H1 (cell line): ENCODE measurements at regions of chr3 and their contacts with region 1.

Region 1: GRCh38 chr3:3799173-3800079 is at the start of gene LRRN1:
- DNase-seq: peak; percentile 69 to 88
- H3K4me3 ChIP-seq: peak within 1 kb of the TSS; percentile 84 to 94 (median 88)
- H3K27ac ChIP-seq: peak within 1 kb of the TSS; percentile 93
- H3K4me1 ChIP-seq: peaks cover 5 to 18% (median 9%) of the 10 kb centered on the region in 4 experiments; a peak in 6 of 7 replicates
- H3K27me3 ChIP-seq: peaks cover 0 to 7% (median 2%) of the 10 kb centered on the region in 4 experiments; a peak in 5 of 7 replicates
- CTCF ChIP-seq: no peak
- EP300 ChIP-seq: peak in 1 of 2 experiments; percentile 62; a peak in 1 of 3 replicates
- POLR2A ChIP-seq: peak; percentile 89 to 98
- RAD21 ChIP-seq: 0 out of 4 replicates have a peak, but pooled peaks of 1 of the 2 experiments have one; percentile 0
- total RNA-seq, gene LRRN1: 199 TPM in 2 replicates

Region 2: DNA sequence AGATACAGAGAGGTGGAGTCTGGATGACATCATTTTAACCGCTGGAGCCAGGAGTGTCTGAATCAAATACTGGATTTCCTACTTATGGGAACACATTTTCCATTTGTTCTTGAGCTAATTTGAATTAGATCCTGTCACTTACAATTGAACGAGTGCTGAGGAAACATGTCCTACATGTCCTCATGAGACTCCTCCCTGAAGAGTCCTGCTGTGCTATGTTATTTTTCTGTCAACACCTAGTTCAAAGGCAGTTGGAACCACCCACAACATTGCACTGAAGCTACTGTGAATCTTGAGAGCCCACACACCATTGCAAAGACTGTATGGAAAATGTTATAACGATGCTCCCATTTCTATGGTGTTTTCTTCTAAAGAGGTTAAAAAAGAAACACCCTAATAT is 496.5 kb before region 1 on chr3:
- CTCF ChIA-PET with region 1: no interaction called
- POLR2A ChIA-PET with region 1: no interaction called
- DNase-seq: no peak
- H3K4me3 ChIP-seq: no peak overlapping the region
- H3K27ac ChIP-seq: no peak overlapping the region
- H3K4me1 ChIP-seq: no peaks in the 10 kb centered on the region
- H3K27me3 ChIP-seq: peaks cover 0 to 1% (median 0%) of the 10 kb centered on the region in 4 experiments; a peak in 1 of 7 replicates
- CTCF ChIP-seq: no peak
- EP300 ChIP-seq: no peak
- POLR2A ChIP-seq: no peak
- RAD21 ChIP-seq: no peak

Region 3: DNA sequence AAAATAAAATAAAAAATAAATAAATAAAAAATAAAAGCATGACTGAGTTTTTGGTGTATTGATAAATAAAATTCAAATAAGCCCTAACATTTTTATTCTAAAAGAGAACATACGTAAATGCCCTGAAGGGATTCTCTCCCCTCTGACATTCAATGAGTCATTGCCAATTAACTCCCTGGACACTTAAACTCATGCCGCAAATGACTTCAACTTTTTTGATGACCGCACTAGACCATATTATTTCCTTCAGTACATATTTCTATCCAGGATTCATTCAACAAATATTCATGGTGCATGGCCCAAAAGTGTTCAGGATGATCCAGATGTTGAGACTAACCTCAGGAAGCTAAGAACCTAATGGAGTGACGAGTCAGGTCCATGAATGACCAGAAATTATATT is 196.1 kb before region 1 on chr3:
- CTCF ChIA-PET with region 1: interaction called, 11 read pairs
- POLR2A ChIA-PET with region 1: interaction called, 10 read pairs
- DNase-seq: no peak
- H3K4me3 ChIP-seq: no peak overlapping the region
- H3K27ac ChIP-seq: no peak overlapping the region
- H3K4me1 ChIP-seq: peaks cover 0 to 4% (median 0%) of the 10 kb centered on the region in 4 experiments; a peak in 2 of 7 replicates
- H3K27me3 ChIP-seq: no peaks in the 10 kb centered on the region
- CTCF ChIP-seq: no peak
- EP300 ChIP-seq: no peak
- POLR2A ChIP-seq: no peak
- RAD21 ChIP-seq: no peak

Region 4: DNA sequence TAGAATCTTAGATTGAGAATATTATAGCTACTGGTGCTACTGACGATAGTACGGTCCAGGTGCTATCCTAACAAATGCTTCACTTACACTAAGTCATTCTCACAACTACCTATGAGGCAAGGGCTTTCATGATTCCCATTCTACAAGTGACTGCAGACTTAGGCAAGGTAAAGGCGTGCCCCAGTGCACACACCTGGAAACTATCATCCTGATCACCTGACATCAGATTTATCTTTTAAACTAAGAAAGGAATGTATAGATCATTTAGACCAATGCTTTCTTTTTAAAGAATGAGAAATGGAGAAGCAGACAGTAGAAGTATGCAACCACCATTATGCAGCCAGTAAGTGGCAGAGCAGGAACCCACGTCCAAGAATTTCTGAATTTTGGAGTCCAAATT is 59.4 kb before region 1 on chr3:
- CTCF ChIA-PET with region 1: interaction called, 4 read pairs
- POLR2A ChIA-PET with region 1: interaction called, 10 read pairs
- DNase-seq: no peak
- H3K4me3 ChIP-seq: no peak overlapping the region
- H3K27ac ChIP-seq: no peak overlapping the region
- H3K4me1 ChIP-seq: peaks cover 0 to 7% (median 4%) of the 10 kb centered on the region in 4 experiments; a peak in 4 of 7 replicates
- H3K27me3 ChIP-seq: no peaks in the 10 kb centered on the region
- CTCF ChIP-seq: no peak
- EP300 ChIP-seq: no peak
- POLR2A ChIP-seq: no peak
- RAD21 ChIP-seq: no peak

Region 5: DNA sequence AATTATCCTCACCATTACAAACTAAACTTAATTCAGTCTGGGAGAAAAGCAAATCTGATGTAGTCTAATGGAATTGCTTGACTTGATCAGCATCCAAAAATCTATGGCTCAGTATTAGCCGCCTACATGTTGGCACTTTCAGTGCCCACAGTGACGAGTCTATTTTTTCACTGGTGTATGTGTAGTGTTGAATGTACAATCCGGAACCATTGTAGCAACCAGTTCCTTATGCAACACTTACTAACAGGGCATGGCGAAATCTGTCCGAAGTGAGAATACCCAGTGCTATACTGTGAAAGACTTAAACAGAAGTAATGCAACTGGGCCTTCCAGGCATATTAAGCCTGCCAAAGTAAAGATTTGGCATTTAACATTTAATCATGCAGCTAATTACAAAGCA is 18.4 kb after region 1 on chr3:
- CTCF ChIA-PET with region 1: no interaction called
- POLR2A ChIA-PET with region 1: interaction called, 115 read pairs
- DNase-seq: no peak
- H3K4me3 ChIP-seq: no peak overlapping the region
- H3K27ac ChIP-seq: no peak overlapping the region
- H3K4me1 ChIP-seq: no peaks in the 10 kb centered on the region; a peak in 1 of 7 replicates
- H3K27me3 ChIP-seq: no peaks in the 10 kb centered on the region
- CTCF ChIP-seq: no peak
- EP300 ChIP-seq: no peak
- POLR2A ChIP-seq: no peak
- RAD21 ChIP-seq: no peak

Region 6: DNA sequence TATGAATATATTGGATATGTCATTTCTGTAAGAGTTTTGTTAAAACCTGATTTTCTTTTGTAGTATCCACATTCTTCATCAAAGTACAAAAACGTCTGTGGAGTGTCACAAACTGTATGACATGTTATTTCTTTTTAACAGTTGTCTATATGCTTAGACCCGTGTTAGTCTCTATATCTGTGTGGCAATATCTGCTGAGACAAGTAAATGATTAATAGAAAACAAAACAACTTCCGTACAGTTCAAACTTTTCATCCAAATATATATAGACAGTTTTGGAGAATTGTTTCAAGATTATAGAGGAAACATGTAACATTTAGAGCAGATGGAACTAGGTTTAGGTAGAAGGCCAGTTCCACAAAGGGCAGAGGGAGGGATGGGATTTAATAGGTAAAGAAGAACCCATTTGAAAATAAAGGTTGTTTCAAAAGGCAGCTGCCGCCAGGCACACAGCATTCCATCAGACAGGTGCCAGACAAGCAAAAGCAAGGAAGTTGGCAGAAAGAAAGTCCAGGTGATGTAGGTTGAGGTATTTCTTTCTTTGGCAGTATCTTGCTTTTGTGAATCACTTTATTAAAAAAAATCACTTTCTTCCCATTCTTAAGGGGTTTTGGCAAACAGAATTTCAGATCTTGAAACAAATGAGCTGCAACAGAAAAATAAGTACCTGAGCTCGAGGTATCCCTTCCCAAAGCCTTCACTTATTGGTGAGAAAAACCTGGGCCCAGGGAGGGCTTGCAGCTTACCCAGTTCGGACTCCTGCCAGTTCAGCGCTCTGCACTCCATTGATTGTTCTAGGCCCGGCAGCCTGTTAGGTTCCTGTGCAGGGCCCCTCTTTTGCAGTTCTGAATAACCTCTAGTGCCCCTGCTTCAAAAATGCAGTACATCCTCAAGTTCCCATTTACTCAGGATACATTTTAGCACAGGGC is 48.8 kb after region 1 on chr3:
- CTCF ChIA-PET with region 1: no interaction called
- POLR2A ChIA-PET with region 1: interaction called, 15 read pairs
- DNase-seq: no peak
- H3K4me3 ChIP-seq: no peak overlapping the region
- H3K27ac ChIP-seq: no peak overlapping the region
- H3K4me1 ChIP-seq: peaks cover 0 to 15% (median 9%) of the 10 kb centered on the region in 4 experiments; a peak in 4 of 7 replicates
- H3K27me3 ChIP-seq: no peaks in the 10 kb centered on the region
- CTCF ChIP-seq: no peak
- EP300 ChIP-seq: no peak
- POLR2A ChIP-seq: no peak
- RAD21 ChIP-seq: no peak